ENCODE measurements at regions of chr3 and their contacts with region 1.

Region 1: DNA sequence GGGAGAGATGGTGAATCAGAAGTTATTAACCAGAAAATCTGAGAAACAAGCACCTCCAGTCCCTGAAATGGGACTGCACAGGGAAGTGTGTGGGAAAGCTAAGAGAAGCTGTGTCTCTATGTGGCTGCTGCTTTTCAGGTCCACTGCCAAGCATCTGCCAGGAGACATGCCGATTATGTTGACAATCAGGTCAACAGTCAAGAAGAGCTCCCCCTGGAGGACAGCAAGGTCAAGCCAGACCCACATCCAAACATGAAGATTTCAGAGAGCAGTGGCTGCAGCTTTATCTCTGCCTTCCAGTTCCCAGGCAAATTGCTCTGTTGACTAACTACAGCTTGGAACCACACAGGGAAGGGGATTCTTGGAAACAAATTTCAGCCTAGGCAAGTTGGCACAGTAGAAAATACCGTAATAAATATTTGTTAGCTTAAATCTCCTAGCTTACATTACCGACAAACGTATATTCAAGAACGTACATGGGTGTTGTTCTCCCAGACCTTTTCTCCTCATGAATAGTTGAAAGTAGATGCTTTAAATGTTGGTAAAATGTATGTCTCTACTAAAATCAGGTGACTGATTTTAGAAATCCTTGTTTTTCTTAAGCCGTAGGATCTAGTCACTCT is 394.5 kb upstream of the RARB start:
- DNase-seq: peak; percentile 59
- ATAC-seq: peak; percentile 94
- H3K4me3 Mint-ChIP-seq: no peak overlapping the region
- H3K27ac Mint-ChIP-seq: no peak overlapping the region
- H3K4me1 Mint-ChIP-seq: no peaks in the 10 kb centered on the region
- H3K27me3 Mint-ChIP-seq: no peaks in the 10 kb centered on the region
- CTCF ChIP-seq: peak; percentile 62

Region 2: GRCh38 chr3:24773798-24774197 is 259.7 kb before region 1 on chr3:
- CTCF ChIA-PET with region 1: interaction called, 14 read pairs
- POLR2A ChIA-PET with region 1: no interaction called
- DNase-seq: peak; percentile 77
- ATAC-seq: peak; percentile 100
- H3K4me3 Mint-ChIP-seq: no peak overlapping the region
- H3K27ac Mint-ChIP-seq: no peak overlapping the region
- H3K4me1 Mint-ChIP-seq: no peaks in the 10 kb centered on the region
- H3K27me3 Mint-ChIP-seq: no peaks in the 10 kb centered on the region
- CTCF ChIP-seq: peak; percentile 59

Region 3: DNA sequence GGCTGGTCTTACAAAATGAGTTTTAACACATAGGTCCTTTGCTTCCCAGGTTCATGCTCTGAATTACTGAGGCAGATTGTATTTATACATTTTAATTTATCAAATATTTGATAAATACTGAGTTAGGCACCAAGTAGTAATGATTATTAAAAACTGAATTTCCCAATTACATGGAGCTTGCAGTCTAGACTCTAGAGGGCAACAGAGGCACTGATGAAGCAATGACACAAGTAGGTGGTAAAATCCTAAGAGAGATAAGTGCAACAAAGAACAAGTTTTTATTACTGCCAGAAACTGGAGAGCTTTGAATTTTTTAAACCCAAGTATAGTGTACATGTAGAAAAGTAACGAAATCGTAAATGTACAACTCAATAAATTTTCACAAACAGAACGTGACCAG is 11.7 kb before region 1 on chr3:
- CTCF ChIA-PET with region 1: interaction called, 31 read pairs
- POLR2A ChIA-PET with region 1: no interaction called
- DNase-seq: no peak
- ATAC-seq: peak; percentile 53; the same call in 1 of the 2 replicates
- H3K4me3 Mint-ChIP-seq: no peak overlapping the region
- H3K27ac Mint-ChIP-seq: no peak overlapping the region
- H3K4me1 Mint-ChIP-seq: no peaks in the 10 kb centered on the region
- H3K27me3 Mint-ChIP-seq: peaks cover 12% of the 10 kb centered on the region
- CTCF ChIP-seq: no peak

Region 4: GRCh38 chr3:25044762-25045710 is 11.5 kb after region 1 on chr3:
- CTCF ChIA-PET with region 1: interaction called, 15 read pairs
- POLR2A ChIA-PET with region 1: no interaction called
- DNase-seq: no peak
- ATAC-seq: peak; percentile 64
- H3K4me3 Mint-ChIP-seq: no peak overlapping the region
- H3K27ac Mint-ChIP-seq: no peak overlapping the region
- H3K4me1 Mint-ChIP-seq: peaks cover 7% of the 10 kb centered on the region
- H3K27me3 Mint-ChIP-seq: no peaks in the 10 kb centered on the region
- CTCF ChIP-seq: no peak

Region 5: DNA sequence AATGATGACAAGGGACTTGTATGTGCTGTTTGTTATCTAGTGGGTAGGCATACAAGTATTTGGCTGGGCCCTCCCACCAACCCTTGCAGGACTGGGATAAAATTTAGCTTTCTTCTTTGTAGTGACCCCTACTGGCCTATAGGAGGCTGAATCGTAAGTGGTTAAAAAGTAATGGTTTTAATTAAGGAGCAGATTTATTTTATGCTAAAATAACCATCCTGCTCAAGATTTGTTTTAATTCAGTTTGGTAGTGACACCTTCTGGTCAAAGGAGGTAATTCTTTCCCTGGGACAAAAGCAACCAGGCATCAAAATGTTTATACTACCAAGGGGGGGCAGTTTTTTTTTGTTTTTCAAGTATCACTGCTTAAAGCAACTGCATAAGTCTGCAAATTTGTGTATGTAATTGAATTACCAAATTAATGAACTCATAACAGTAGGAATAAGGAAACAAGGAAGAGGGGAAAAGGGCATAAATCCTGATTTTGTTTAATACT is 560.5 kb after region 1 on chr3:
- CTCF ChIA-PET with region 1: interaction called, 11 read pairs
- POLR2A ChIA-PET with region 1: no interaction called
- DNase-seq: no peak
- ATAC-seq: peak; percentile 79
- H3K4me3 Mint-ChIP-seq: no peak overlapping the region
- H3K27ac Mint-ChIP-seq: no peak overlapping the region
- H3K4me1 Mint-ChIP-seq: peaks cover 19% of the 10 kb centered on the region
- H3K27me3 Mint-ChIP-seq: no peaks in the 10 kb centered on the region
- CTCF ChIP-seq: peak; percentile 68

Measured in WTC11 (cell line).